ENCODE measurements at regions of chr11 and their contacts with region 1.

Region 1: DNA sequence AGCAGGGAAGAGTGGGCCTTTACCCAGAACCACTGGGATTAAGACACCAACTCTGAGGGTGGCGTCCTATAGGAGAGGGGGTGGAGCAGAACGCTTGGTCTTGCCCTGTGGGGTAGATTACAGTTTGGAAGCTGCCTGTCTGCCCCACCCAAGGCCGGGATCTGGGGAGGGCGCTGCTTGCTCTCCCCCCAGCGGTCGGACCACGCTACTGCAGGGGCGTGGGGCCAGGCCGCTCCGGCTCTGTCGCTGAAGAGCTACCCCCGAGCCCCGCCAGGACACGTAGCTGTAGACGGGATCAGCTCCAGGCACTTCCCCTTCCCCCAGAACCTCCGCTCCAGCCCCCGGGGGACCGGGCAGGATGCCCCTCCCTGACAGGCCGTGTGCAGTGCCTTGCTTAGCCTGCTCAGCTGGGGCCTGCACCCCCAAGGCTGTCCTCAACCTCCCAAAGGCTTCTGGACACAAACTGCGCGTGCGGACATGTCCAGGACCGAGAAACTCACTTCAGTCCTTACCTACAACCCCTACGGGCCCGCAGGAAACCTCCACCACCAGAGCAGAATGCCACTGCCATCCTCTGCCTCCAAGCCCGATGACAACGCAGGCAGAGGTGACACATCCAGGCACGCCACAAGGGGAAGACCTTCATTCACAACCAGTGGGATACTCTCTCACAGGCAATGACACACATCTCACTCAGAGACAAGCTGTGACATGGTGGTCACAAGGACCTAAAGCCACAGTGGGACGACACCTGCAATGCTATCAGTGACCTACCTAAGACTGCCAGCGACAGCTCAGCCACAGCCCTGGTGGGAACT is 3.6 kb downstream of the AHNAK start:
- DNase-seq: no peak
- ATAC-seq: peak; percentile 35
- H3K4me3 ChIP-seq: peak overlapping the region; percentile 33 to 93 (median 79)
- H3K27ac ChIP-seq: peak overlapping the region; percentile 19
- H3K4me1 ChIP-seq: peaks cover 60% of the 10 kb centered on the region
- H3K27me3 ChIP-seq: no peaks in the 10 kb centered on the region
- CTCF ChIP-seq: peak; percentile 97
- EP300 ChIP-seq: no peak
- POLR2A ChIP-seq: 0 out of 4 replicates have a peak, but pooled peaks of 1 of the 2 experiments have one; percentile 11
- RAD21 ChIP-seq: peak; percentile 98

Region 2: GRCh38 chr11:62370743-62371440 is 172.1 kb before region 1 on chr11:
- CTCF ChIA-PET with region 1: no interaction called
- POLR2A ChIA-PET with region 1: no interaction called
- in situ Hi-C with region 1: no loop called
- intact Hi-C with region 1: no loop called
- DNase-seq: no peak
- ATAC-seq: no peak
- H3K4me3 ChIP-seq: no peak overlapping the region
- H3K27ac ChIP-seq: no peak overlapping the region
- H3K4me1 ChIP-seq: no peaks in the 10 kb centered on the region
- H3K27me3 ChIP-seq: no peaks in the 10 kb centered on the region
- CTCF ChIP-seq: no peak
- EP300 ChIP-seq: no peak
- POLR2A ChIP-seq: no peak
- RAD21 ChIP-seq: no peak

Region 3: DNA sequence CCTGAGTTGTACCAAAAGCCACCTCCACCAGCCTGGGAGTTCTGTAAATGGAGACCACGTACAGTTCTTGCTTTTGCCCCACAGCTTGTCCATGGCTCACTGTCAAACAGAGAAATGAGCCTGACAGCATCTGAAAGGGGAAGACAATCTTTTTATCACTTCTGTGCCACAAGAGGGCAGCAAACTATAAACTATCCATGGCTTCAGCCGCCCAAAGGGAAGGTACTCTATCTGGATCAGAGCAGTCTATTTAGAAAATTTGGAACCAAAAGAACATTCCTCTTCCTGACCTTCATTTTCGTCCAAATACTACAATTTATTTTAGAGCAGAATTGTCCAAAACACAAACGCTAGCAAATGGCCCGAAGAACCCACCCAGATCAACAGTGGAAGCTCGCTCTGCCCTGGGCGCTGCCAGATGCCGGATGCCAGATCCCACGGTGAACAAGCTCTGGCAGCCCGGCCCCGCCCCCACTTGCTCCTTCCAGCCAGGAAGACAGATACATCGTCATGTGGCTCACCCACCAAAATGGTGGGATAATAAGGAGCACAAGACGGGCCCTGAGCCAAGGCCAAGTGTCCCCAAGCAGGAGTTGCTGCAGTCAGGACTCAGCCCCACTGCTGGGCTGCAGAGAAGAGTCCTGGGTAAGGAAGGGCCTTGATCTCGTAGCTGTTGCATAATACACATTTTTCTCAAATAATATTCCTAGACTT is 148.0 kb before region 1 on chr11:
- CTCF ChIA-PET with region 1: interaction called, 5 read pairs
- POLR2A ChIA-PET with region 1: interaction called, 4 read pairs
- in situ Hi-C with region 1: no loop called
- intact Hi-C with region 1: loop called (anchors 10 kb)
- DNase-seq: peak; percentile 71
- ATAC-seq: peak; percentile 67
- H3K4me3 ChIP-seq: no peak overlapping the region
- H3K27ac ChIP-seq: no peak overlapping the region
- H3K4me1 ChIP-seq: peaks cover 27% of the 10 kb centered on the region
- H3K27me3 ChIP-seq: peaks cover 0 to 10% of the 10 kb centered on the region in 2 experiments; a peak in 1 of 5 replicates
- CTCF ChIP-seq: peak; percentile 85
- EP300 ChIP-seq: no peak
- POLR2A ChIP-seq: no peak
- RAD21 ChIP-seq: peak; percentile 66

Region 4: GRCh38 chr11:62427630-62428233 is 115.2 kb before region 1 on chr11:
- CTCF ChIA-PET with region 1: interaction called, 14 read pairs
- POLR2A ChIA-PET with region 1: interaction called, 19 read pairs
- in situ Hi-C with region 1: no loop called
- intact Hi-C with region 1: loop called (anchors 1 kb)
- DNase-seq: no peak
- ATAC-seq: no peak
- H3K4me3 ChIP-seq: no peak overlapping the region
- H3K27ac ChIP-seq: peak overlapping the region; percentile 30
- H3K4me1 ChIP-seq: peaks cover 81% of the 10 kb centered on the region
- H3K27me3 ChIP-seq: no peaks in the 10 kb centered on the region
- CTCF ChIP-seq: no peak
- EP300 ChIP-seq: no peak
- POLR2A ChIP-seq: no peak
- RAD21 ChIP-seq: no peak

Region 5: GRCh38 chr11:62497132-62497915 is 45.6 kb before region 1 on chr11:
- CTCF ChIA-PET with region 1: interaction called, 5 read pairs
- POLR2A ChIA-PET with region 1: interaction called, 17 read pairs
- in situ Hi-C with region 1: no loop called
- intact Hi-C with region 1: loop called (anchors 2 kb)
- DNase-seq: peak; percentile 86
- ATAC-seq: peak; percentile 81
- H3K4me3 ChIP-seq: no peak overlapping the region
- H3K27ac ChIP-seq: no peak overlapping the region
- H3K4me1 ChIP-seq: peaks cover 71% of the 10 kb centered on the region
- H3K27me3 ChIP-seq: peaks cover 0 to 4% of the 10 kb centered on the region in 2 experiments; a peak in 1 of 5 replicates
- CTCF ChIP-seq: peak; percentile 86
- EP300 ChIP-seq: peak in 1 of 2 experiments; percentile 71; a peak in 2 of 4 replicates
- POLR2A ChIP-seq: no peak
- RAD21 ChIP-seq: peak; percentile 70

Region 6: DNA sequence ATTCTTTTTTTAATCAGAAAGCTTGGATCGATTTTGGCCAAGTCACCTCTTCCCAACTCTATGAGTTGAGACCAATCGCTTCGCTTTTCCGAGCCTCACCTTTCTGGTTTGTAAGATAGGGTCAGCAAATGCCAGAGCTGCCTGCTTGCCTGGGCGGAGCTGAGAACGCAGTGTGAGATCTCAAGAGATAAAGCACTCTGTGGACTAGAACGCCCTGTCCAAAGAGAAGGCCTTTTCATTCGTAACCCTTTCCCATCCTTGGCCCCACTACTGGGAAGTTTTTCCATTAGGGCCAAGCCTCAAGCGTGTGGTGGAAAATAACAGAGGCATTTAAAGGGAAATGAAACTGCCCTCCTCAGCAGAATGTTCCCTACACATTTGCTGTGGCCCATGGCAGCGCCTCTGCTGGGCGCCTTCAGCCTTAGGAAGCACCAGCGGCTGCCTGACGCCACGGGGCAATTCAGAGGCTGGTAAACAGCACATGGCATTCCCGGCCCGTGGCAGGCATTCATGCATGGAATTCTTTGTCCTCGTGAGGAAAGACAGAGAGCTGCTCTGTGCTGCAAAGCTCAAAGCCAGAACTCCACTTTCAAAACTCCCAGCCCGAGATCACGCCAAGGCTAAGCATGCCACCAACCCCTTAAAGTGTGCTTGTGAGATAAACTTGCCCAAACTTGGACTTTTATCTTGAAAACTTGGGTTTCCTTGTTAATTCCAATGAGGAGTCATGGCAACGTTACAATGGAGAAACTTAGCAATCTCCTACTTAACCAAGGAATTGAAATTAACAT is 34.5 kb before region 1 on chr11:
- CTCF ChIA-PET with region 1: no interaction called
- POLR2A ChIA-PET with region 1: interaction called, 6 read pairs
- in situ Hi-C with region 1: loop called (anchors 5 kb)
- intact Hi-C with region 1: no loop called
- DNase-seq: peak; percentile 88
- ATAC-seq: peak; percentile 92
- H3K4me3 ChIP-seq: peak overlapping the region; percentile 45 to 60 (median 51)
- H3K27ac ChIP-seq: peak overlapping the region; percentile 8
- H3K4me1 ChIP-seq: peaks cover 76% of the 10 kb centered on the region
- H3K27me3 ChIP-seq: peaks cover 5 to 25% of the 10 kb centered on the region in 2 experiments; a peak in 4 of 5 replicates
- CTCF ChIP-seq: peak; percentile 67
- EP300 ChIP-seq: peak in 1 of 2 experiments; percentile 14; a peak in 1 of 4 replicates
- POLR2A ChIP-seq: no peak
- RAD21 ChIP-seq: peak; percentile 85

Region 7: GRCh38 chr11:62514151-62514550 is 28.8 kb before region 1 on chr11:
- CTCF ChIA-PET with region 1: no interaction called
- POLR2A ChIA-PET with region 1: interaction called, 8 read pairs
- in situ Hi-C with region 1: loop called (anchors 5 kb)
- intact Hi-C with region 1: loop called (anchors 1 kb)
- DNase-seq: no peak
- ATAC-seq: peak; percentile 13
- H3K4me3 ChIP-seq: no peak overlapping the region
- H3K27ac ChIP-seq: peak overlapping the region; percentile 62
- H3K4me1 ChIP-seq: peaks cover 77% of the 10 kb centered on the region
- H3K27me3 ChIP-seq: no peaks in the 10 kb centered on the region
- CTCF ChIP-seq: no peak
- EP300 ChIP-seq: no peak
- POLR2A ChIP-seq: 0 out of 4 replicates have a peak, but pooled peaks of 1 of the 2 experiments have one; percentile 16
- RAD21 ChIP-seq: no peak

Region 8: GRCh38 chr11:62556108-62556871 is 13.3 kb after region 1 on chr11:
- CTCF ChIA-PET with region 1: interaction called, 10 read pairs
- POLR2A ChIA-PET with region 1: interaction called, 11 read pairs
- in situ Hi-C with region 1: no loop called
- intact Hi-C with region 1: loop called (anchors 2 kb)
- DNase-seq: no peak
- ATAC-seq: peak; percentile 1
- H3K4me3 ChIP-seq: no peak overlapping the region
- H3K27ac ChIP-seq: peak overlapping the region; percentile 44
- H3K4me1 ChIP-seq: peaks cover 85% of the 10 kb centered on the region
- H3K27me3 ChIP-seq: no peaks in the 10 kb centered on the region
- CTCF ChIP-seq: no peak
- EP300 ChIP-seq: no peak
- POLR2A ChIP-seq: no peak
- RAD21 ChIP-seq: no peak

Measured in HepG2 (cell line).